Heart right ventricle (tissue), 16 donors: ENCODE measurements at regions of chr4 and their contacts with region 1.

Region 1: DNA sequence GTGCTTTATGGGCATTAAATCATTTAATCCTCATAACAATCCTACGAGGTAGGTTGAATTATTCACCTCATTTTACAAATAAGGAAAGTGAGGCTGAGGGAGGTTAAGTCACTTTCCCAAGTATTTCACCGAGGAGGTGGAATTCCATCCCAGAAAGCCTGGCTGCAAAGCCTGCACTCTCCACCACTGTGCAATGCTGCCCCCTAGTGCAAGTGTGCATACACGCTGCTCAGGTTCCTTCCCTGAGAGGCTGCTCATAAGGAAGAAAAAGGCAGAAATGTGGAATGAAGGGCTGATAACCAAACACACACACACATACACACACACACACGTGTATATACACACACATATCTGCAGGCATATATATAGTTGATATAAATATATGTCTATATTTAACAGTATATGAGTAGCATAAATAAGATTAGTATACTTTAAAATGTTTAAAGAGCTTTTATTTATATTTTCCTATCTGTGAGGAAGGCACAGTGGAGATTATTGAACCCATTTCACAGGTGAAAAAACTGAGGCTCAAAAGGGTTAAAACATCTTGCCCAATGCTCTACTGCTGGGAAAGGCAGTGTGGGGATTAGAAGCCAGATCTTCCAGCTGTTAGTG is 714.5 kb upstream of the TENM3 start:
- DNase-seq: peak; percentile 43 to 49
- ATAC-seq: peak in 4 of 8 donors; percentile 70 to 81 (median 76)
- H3K4me3 ChIP-seq: no peak overlapping the region
- H3K27ac ChIP-seq: no peak overlapping the region
- H3K4me1 ChIP-seq: no peaks in the 10 kb centered on the region
- H3K27me3 ChIP-seq: peaks cover 0 to 5% (median 0%) of the 10 kb centered on the region in 7 donors
- CTCF ChIP-seq: peak; percentile 50 to 84 (median 75)

Region 2: DNA sequence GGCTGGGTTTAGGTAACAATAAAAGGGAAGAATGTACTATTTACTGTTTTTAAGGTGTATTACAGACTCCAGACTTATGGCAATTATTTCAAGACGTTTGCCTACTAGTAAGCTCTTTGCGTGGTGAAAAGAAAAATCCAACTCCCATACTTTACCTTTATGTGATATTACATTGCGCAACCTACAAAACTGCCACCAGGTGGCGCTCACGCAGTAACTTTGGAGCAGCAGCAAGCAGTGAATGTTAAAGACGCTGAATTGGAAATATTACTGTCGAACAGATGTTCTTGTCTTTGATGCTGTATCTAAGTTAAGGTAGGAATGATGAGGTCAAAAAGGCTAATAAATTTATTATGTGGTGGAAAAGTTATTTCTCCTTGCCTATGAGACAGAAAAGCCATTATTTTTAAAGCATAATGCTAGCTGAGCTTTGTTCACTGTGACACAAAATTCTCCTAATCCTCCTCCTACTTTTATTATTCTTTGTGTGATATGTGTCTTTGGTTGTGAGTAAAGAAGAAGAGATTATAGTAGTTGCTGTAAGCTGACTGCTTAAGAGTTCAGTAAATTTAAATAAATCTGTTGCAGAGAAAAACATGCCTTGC is 385.3 kb before region 1 on chr4:
- intact Hi-C with region 1: loop called (anchors 1 to 5 kb)
- DNase-seq: peak; percentile 61 to 71
- ATAC-seq: peak in 4 of 8 donors; percentile 38 to 82 (median 63)
- H3K4me3 ChIP-seq: no peak overlapping the region
- H3K27ac ChIP-seq: no peak overlapping the region
- H3K4me1 ChIP-seq: no peaks in the 10 kb centered on the region
- H3K27me3 ChIP-seq: peaks cover 0 to 26% (median 3%) of the 10 kb centered on the region in 7 donors
- CTCF ChIP-seq: peak; percentile 79 to 92 (median 87)

Region 3: GRCh38 chr4:181261279-181261678 is 267.4 kb before region 1 on chr4:
- intact Hi-C with region 1: loop called in 7 of 10 experiments (anchors 1 to 5 kb)
- DNase-seq: no peak
- ATAC-seq: peak in 1 of 8 donors; percentile 55
- H3K4me3 ChIP-seq: no peak overlapping the region
- H3K27ac ChIP-seq: no peak overlapping the region
- H3K4me1 ChIP-seq: no peaks in the 10 kb centered on the region
- H3K27me3 ChIP-seq: no peaks in the 10 kb centered on the region
- CTCF ChIP-seq: peak in 6 of 9 donors; percentile 14 to 58 (median 54)

Region 4: DNA sequence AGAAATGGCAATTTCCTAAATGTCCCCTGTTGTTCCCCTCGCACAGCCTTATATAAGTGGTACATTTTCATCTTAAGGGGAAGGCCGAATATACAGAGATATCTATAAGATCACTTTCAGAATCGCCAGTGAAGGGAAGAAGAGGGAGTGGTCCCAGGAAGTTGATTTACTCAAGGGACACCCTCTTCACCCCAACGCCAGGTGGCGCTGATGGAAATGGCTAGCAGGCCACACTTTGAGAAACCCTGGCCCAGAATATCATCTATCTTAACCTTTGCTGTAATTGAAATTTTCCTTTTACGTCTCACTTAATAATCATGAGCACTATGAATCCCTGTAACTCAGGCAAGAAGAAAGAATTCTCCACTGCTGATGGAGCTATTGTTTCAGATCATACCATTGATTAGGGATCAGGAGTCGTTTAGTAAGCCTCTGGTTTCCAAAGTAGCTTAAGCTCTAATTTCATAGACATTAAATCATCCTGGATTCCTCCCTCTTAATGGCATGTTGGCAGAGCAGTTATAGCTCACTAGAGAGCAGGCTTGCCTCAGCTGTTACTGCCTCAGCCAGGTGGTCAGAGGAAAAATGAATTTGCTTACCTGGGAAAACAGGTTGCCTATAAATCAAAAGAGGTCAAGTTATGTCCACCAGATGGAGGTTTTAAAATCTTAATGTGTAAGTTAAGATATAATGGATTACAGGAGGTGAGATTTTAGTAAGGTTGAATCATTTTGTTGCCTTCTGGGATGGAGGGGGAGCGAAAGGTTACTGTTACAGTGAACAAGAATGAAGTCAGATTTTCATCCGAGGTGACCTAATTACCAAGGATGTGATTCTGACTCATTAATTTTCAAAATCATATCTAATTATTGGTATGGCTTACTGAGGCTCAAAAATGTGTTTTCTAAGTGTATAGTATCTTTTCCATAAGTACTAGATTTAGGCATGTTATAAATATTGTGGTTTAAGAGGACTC is 226.7 kb before region 1 on chr4:
- intact Hi-C with region 1: loop called in 2 of 10 experiments (anchors 5 to 10 kb)
- DNase-seq: peak in 1 of 2 donors; percentile 17
- ATAC-seq: peak in 3 of 8 donors; percentile 45 to 88 (median 67)
- H3K4me3 ChIP-seq: no peak overlapping the region
- H3K27ac ChIP-seq: peak overlapping the region in 1 of 10 donors; percentile 27
- H3K4me1 ChIP-seq: no peaks in the 10 kb centered on the region
- H3K27me3 ChIP-seq: no peaks in the 10 kb centered on the region
- CTCF ChIP-seq: peak in 7 of 9 donors; percentile 17 to 43 (median 31)

Region 5: DNA sequence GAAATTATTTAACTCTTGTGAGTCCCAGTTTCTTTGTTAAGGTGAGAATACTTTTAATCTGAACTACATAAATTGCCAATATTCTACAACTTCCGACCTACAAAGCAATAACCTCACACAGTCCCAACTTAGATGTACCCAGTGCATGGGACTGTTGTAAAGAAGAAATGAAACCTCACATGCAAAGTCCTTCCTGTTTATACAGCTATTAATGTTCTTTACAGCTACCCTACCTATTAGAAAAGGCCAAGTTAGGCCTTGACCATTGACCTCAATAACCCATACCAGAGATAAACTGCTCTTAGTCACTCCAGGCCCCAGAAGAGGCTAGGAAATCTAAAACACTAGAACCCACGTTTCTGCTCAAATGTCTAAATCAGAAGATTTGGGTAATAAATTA is 205.6 kb before region 1 on chr4:
- intact Hi-C with region 1: no loop called
- DNase-seq: no peak
- ATAC-seq: no peak
- H3K4me3 ChIP-seq: no peak overlapping the region
- H3K27ac ChIP-seq: no peak overlapping the region
- H3K4me1 ChIP-seq: peaks cover 0 to 10% (median 0%) of the 10 kb centered on the region in 9 donors
- H3K27me3 ChIP-seq: no peaks in the 10 kb centered on the region
- CTCF ChIP-seq: no peak